Astrocyte of the cerebellum (primary cell): ENCODE measurements at regions of chr3 and their contacts with region 1.

Region 1: GRCh38 chr3:149662240-149662887 is 4.5 kb upstream of the WWTR1 start:
- DNase-seq: no peak
- H3K4me3 ChIP-seq: no peak overlapping the region
- CTCF ChIP-seq: no peak

Region 2: GRCh38 chr3:149717391-149718056 is 55.2 kb after region 1 on chr3:
- in situ Hi-C with region 1: loop called (anchors 5 kb)
- DNase-seq: peak; percentile 70
- H3K4me3 ChIP-seq: no peak overlapping the region
- CTCF ChIP-seq: peak; percentile 63